ENCODE measurements at regions of chr20 and their contacts with region 1.

Region 1: DNA sequence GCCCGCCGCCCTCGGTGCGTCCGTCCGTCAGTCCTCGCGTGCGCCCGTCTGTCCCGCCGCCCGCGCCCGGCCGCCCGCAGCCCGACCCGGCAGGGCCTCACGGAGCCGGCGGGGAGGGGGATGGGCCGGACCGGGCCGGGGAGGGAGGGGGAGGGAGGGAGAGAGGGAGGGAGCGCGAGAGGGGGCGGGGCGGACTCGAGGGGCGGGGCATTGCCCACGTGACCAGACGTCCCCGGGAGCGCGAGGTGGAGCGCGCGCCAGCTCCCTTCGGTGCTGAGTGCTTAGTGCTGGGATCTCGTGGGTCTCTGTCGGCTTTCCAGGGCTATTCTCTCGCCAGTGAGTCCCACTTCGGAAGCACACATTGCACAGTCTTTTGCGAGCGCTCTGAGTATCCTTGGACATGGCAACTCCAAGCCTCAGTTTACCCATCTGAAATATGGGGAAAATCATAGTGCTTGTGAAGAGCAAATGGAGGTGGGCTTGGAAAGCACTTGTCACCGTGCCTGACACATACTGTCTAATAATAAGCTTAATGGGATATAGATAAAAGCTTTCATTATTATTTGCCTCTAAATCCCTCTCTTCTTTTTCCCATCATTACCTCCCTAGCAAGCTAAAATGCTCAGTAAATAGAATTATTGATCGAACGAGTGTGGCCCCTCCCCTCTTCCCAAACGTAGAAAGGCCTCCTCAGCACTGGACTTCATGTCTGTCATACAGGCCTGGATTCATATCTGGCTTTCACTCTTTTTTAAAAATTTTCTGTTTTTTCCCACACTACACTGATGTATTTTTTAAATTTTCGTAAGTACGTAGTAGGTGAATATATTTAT is at the start of gene NCOA6:
- DNase-seq: peak; percentile 76
- ATAC-seq: peak; percentile 69
- H3K4me3 ChIP-seq: peak within 1 kb of the TSS; percentile 87 to 100 (median 92)
- H3K27ac ChIP-seq: peak within 1 kb of the TSS; percentile 79
- H3K4me1 ChIP-seq: peaks cover 44% of the 10 kb centered on the region
- H3K27me3 ChIP-seq: peaks cover 1 to 3% of the 10 kb centered on the region in 2 experiments; a peak in 1 of 5 replicates
- CTCF ChIP-seq: no peak
- EP300 ChIP-seq: no peak
- POLR2A ChIP-seq: peak; percentile 77 to 98
- RAD21 ChIP-seq: 0 out of 2 replicates have a peak, but pooled peaks have one; percentile 2
- total RNA-seq, gene NCOA6: 11.2 and 27.2 TPM in 2 replicates

Region 2: GRCh38 chr20:34955232-34956040 is 129.7 kb after region 1 on chr20 and contains the starts of genes GSS and MYH7B:
- CTCF ChIA-PET with region 1: no interaction called
- POLR2A ChIA-PET with region 1: interaction called, 10 read pairs
- in situ Hi-C with region 1: no loop called
- intact Hi-C with region 1: no loop called
- DNase-seq: peak; percentile 98
- ATAC-seq: peak; percentile 94
- H3K4me3 ChIP-seq: peak within 1 kb of the TSS; percentile 74 to 83 (median 82)
- H3K27ac ChIP-seq: peak within 1 kb of the TSS; percentile 72
- H3K4me1 ChIP-seq: peaks cover 41% of the 10 kb centered on the region
- H3K27me3 ChIP-seq: peaks cover 0 to 10% of the 10 kb centered on the region in 2 experiments; a peak in 2 of 5 replicates
- CTCF ChIP-seq: peak; percentile 99
- EP300 ChIP-seq: peak in 1 of 2 experiments; percentile 20; a peak in 1 of 4 replicates
- POLR2A ChIP-seq: peak; percentile 89 to 98
- RAD21 ChIP-seq: peak; percentile 75
- total RNA-seq, gene GSS: 102 and 107 TPM in 2 replicates
- total RNA-seq, gene MYH7B: 0.18 and 0.20 TPM in 2 replicates